ENCODE measurements at regions of chr10 and their contacts with region 1.

Region 1: GRCh38 chr10:63629363-63630084 is 108.3 kb downstream of the REEP3 start:
- DNase-seq: peak; percentile 96 to 98 (median 98)
- ATAC-seq: peak; percentile 83 to 85
- H3K4me3 ChIP-seq: peak overlapping the region; percentile 46
- H3K27ac ChIP-seq: peak overlapping the region; percentile 100
- H3K4me1 ChIP-seq: peaks cover 5% of the 10 kb centered on the region
- H3K27me3 ChIP-seq: no peaks in the 10 kb centered on the region

Region 2: DNA sequence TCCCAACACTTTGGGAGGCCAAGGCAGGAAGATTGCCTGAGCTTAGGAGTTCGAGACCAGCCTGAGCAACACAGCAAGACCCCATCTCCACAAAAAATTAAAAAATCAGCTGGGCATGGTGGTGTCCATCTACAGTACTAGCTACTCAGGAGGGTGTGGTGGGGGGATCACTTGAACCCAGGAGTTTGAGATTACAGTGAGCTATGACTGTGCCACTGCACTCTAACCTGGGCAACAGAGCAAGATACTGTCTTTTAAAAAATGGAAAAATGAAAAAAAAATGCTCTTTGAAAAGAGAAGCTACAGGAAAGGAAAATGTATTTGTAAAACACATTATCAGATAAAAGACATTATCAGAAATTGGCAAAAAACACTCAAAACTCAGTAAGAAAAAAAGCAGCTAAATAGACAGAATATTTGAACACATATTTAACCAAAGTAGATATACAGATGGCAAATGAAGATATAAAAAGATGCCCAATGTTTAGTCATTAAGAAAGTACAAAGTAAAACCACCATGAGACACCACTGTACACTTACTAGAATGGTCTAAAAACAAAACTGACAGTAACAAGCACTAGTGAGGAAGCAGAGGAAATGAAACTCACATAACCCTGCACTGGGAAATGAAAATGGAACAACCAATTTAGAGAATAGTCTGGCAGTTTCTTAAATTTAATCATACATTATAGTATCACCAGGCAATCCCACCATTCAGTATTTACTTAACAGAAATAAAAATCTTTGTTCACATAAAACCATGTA is 455.9 kb before region 1 on chr10:
- intact Hi-C with region 1: loop called in 1 of 4 experiments (anchors 10 kb)
- DNase-seq: no peak
- ATAC-seq: no peak
- H3K4me3 ChIP-seq: no peak overlapping the region
- H3K27ac ChIP-seq: no peak overlapping the region
- H3K4me1 ChIP-seq: peaks cover 3% of the 10 kb centered on the region
- H3K27me3 ChIP-seq: no peaks in the 10 kb centered on the region

Region 3: GRCh38 chr10:63217120-63217605 is 412.4 kb before region 1 on chr10:
- intact Hi-C with region 1: loop called in 2 of 4 experiments (anchors 5 to 10 kb)
- DNase-seq: no peak
- ATAC-seq: peak; percentile 72 to 82
- H3K4me3 ChIP-seq: no peak overlapping the region
- H3K27ac ChIP-seq: no peak overlapping the region
- H3K4me1 ChIP-seq: no peaks in the 10 kb centered on the region
- H3K27me3 ChIP-seq: no peaks in the 10 kb centered on the region

Region 4: GRCh38 chr10:63407136-63407662 is 222.3 kb before region 1 on chr10:
- intact Hi-C with region 1: no loop called
- DNase-seq: no peak
- ATAC-seq: no peak
- H3K4me3 ChIP-seq: no peak overlapping the region
- H3K27ac ChIP-seq: no peak overlapping the region
- H3K4me1 ChIP-seq: no peaks in the 10 kb centered on the region
- H3K27me3 ChIP-seq: no peaks in the 10 kb centered on the region

Region 5: GRCh38 chr10:63465293-63466143 is 164.0 kb before region 1 on chr10 and contains the start of gene JMJD1C:
- intact Hi-C with region 1: loop called in 1 of 4 experiments (anchors 10 kb)
- DNase-seq: peak; percentile 83 to 93 (median 89)
- ATAC-seq: peak; percentile 95 to 96
- H3K4me3 ChIP-seq: peak within 1 kb of the TSS; percentile 64
- H3K27ac ChIP-seq: peak within 1 kb of the TSS; percentile 88
- H3K4me1 ChIP-seq: no peaks in the 10 kb centered on the region
- H3K27me3 ChIP-seq: no peaks in the 10 kb centered on the region
- total RNA-seq, gene JMJD1C: 42.2 to 44.8 (median 43.8) TPM

Region 6: GRCh38 chr10:63603709-63604445 is 25.6 kb before region 1 on chr10:
- intact Hi-C with region 1: no loop called
- DNase-seq: no peak
- ATAC-seq: no peak
- H3K4me3 ChIP-seq: no peak overlapping the region
- H3K27ac ChIP-seq: no peak overlapping the region
- H3K4me1 ChIP-seq: peaks cover 1% of the 10 kb centered on the region
- H3K27me3 ChIP-seq: no peaks in the 10 kb centered on the region

Region 7: GRCh38 chr10:63711867-63712716 is 82.6 kb after region 1 on chr10:
- intact Hi-C with region 1: loop called in 3 of 4 experiments (anchors 2 to 5 kb)
- DNase-seq: peak; percentile 96 to 97 (median 96)
- ATAC-seq: peak; percentile 93
- H3K4me3 ChIP-seq: no peak overlapping the region
- H3K27ac ChIP-seq: peak overlapping the region; percentile 98
- H3K4me1 ChIP-seq: peaks cover 19% of the 10 kb centered on the region
- H3K27me3 ChIP-seq: no peaks in the 10 kb centered on the region